Activated CD4-positive, alpha-beta T cell treated with anti-CD3 and anti-CD28 coated beads, Interleukin-2, amount 10 ng/mL, durations not matched to agents 24 days and 14 days (primary cell): ENCODE measurements at regions of chr7 and their contacts with region 1.

Region 1: DNA sequence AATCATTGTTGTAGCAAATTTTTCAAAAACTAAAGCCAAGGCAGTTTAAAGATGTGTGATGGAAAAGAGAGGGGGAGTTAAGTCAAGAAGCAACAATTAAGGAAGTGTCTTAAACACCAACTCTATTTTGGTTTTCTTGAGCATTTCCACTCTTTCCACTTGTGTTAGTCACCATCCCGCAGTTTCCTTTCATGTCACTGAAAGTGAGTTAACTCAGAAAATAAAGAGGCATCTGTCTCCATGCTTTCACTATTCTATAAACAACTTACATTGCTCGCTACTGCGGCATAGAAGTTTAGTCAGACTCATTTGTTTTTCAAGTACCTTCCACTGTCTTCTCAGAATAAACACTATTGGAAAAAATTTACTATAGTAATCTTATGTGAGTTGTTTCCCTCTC is 284.9 kb upstream of the SEMA3D start:
- DNase-seq: peak; percentile 58
- H3K4me3 Mint-ChIP-seq: peak overlapping the region; percentile 25
- H3K27ac Mint-ChIP-seq: peak overlapping the region; percentile 68
- H3K4me1 Mint-ChIP-seq: peaks cover 13% of the 10 kb centered on the region
- H3K27me3 Mint-ChIP-seq: no peaks in the 10 kb centered on the region

Region 2: DNA sequence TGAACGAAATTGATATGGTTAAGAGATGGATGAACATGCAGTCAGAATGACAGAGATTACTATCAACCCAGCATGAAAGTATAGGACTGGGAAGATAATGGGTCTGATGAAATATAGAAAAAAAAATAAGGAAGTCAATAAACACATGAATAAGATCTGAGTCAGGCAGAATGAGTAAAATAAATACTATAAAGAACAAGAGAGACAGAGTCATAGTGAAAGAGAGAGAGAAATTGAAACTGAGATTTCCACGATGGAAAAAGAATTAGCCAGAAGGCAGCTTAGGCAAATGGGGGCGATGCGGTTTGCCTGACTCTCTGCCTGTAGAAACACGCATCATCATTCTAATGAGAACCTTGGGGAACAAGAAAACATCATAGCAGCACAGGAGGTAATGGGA is 311.5 kb before region 1 on chr7:
- intact Hi-C with region 1: loop called (anchors 5 kb)
- DNase-seq: no peak
- H3K4me3 Mint-ChIP-seq: no peak overlapping the region
- H3K27ac Mint-ChIP-seq: peak overlapping the region; percentile 86
- H3K4me1 Mint-ChIP-seq: peaks cover 8% of the 10 kb centered on the region
- H3K27me3 Mint-ChIP-seq: no peaks in the 10 kb centered on the region

Region 3: GRCh38 chr7:85489498-85489897 is 17.8 kb after region 1 on chr7:
- intact Hi-C with region 1: loop called (anchors 1 kb)
- DNase-seq: no peak
- H3K4me3 Mint-ChIP-seq: no peak overlapping the region
- H3K27ac Mint-ChIP-seq: no peak overlapping the region
- H3K4me1 Mint-ChIP-seq: no peaks in the 10 kb centered on the region
- H3K27me3 Mint-ChIP-seq: no peaks in the 10 kb centered on the region